ENCODE measurements at regions of chr2 and their contacts with region 1.

Region 1: DNA sequence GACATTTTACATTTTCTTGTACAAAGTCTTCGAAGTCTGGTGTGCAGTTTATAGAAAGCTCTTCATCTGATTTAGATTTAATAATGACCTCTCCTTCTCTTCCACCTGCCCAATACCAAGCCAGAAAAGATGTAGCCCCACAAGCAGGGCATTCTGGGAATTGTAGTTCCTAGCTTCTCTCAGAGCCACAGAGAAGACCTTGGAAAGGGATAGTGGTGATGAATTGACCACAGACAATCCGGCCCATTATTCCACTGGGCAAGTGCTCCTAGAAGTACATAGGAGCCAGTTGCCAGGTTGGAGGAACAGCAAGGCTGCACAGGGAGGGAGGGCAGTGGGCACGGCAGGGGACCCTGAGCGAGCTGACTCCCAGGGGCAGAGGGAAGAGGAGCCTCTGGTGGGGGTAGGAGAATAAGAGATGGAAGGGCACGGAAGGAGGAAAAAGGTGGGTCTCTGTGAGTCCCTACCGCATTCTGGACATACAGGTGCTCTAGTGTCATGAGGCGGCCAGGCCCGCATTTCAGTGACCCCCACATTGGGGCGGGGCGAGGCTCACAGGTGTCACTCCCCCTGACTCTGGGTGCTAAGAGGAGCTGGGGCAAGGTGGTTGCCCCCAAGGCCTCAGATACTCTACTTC is 152.5 kb upstream of the HAAO start:
- DNase-seq: no peak
- ATAC-seq: no peak
- H3K4me3 ChIP-seq: no peak overlapping the region
- H3K4me3 Mint-ChIP-seq: no peak overlapping the region
- H3K27ac ChIP-seq: no peak overlapping the region
- H3K27ac Mint-ChIP-seq: no peak overlapping the region
- H3K4me1 ChIP-seq: peaks cover 30 to 33% of the 10 kb centered on the region in 2 donors
- H3K4me1 Mint-ChIP-seq: peaks cover 33% of the 10 kb centered on the region
- H3K27me3 ChIP-seq: no peaks in the 10 kb centered on the region
- H3K27me3 Mint-ChIP-seq: no peaks in the 10 kb centered on the region
- CTCF ChIP-seq: no peak

Region 2: DNA sequence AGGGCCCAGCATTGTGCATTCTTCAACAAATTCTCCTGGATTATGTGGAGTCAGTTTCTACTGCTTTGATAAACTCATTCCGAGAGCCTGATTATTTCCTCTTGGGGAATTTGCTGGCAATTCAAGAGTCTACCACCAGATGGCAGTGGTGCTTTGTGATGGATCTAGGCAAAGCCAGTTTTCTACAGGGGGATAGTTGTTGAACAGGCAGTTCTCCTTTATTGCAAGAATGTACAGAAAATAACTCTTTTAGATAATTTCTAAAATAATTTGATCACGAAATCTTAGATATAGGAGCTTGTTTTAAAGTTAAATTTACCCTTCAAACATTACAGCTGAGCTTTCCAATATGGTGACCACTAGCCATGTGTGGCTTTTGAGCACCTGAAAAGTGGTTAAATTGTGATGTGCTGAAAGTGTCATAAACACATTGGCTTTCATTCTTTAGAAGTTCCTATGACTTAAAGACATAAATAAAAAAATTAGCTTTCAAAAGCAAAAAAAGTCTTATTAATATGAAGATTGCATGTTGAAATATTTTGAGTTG is 85.8 kb before region 1 on chr2:
- CTCF ChIA-PET with region 1: interaction called, 6 read pairs
- POLR2A ChIA-PET with region 1: no interaction called
- intact Hi-C with region 1: loop called (anchors 1 kb)
- DNase-seq: peak; percentile 72
- ATAC-seq: peak; percentile 53
- H3K4me3 ChIP-seq: no peak overlapping the region
- H3K4me3 Mint-ChIP-seq: no peak overlapping the region
- H3K27ac ChIP-seq: no peak overlapping the region
- H3K27ac Mint-ChIP-seq: no peak overlapping the region
- H3K4me1 ChIP-seq: no peaks in the 10 kb centered on the region
- H3K4me1 Mint-ChIP-seq: no peaks in the 10 kb centered on the region
- H3K27me3 ChIP-seq: no peaks in the 10 kb centered on the region
- H3K27me3 Mint-ChIP-seq: peaks cover 3% of the 10 kb centered on the region
- CTCF ChIP-seq: peak; percentile 92

Region 3: GRCh38 chr2:42974721-42975717 is 30.1 kb after region 1 on chr2:
- CTCF ChIA-PET with region 1: interaction called, 26 read pairs
- POLR2A ChIA-PET with region 1: no interaction called
- intact Hi-C with region 1: loop called (anchors 1 kb)
- DNase-seq: peak; percentile 69
- ATAC-seq: peak; percentile 78
- H3K4me3 ChIP-seq: no peak overlapping the region
- H3K4me3 Mint-ChIP-seq: peak overlapping the region; percentile 26
- H3K27ac ChIP-seq: no peak overlapping the region
- H3K27ac Mint-ChIP-seq: no peak overlapping the region
- H3K4me1 ChIP-seq: peaks cover 30 to 31% of the 10 kb centered on the region in 2 donors
- H3K4me1 Mint-ChIP-seq: peaks cover 35% of the 10 kb centered on the region
- H3K27me3 ChIP-seq: peaks cover 0 to 3% (median 0%) of the 10 kb centered on the region in 4 experiments
- H3K27me3 Mint-ChIP-seq: no peaks in the 10 kb centered on the region
- CTCF ChIP-seq: peak; percentile 75

Region 4: DNA sequence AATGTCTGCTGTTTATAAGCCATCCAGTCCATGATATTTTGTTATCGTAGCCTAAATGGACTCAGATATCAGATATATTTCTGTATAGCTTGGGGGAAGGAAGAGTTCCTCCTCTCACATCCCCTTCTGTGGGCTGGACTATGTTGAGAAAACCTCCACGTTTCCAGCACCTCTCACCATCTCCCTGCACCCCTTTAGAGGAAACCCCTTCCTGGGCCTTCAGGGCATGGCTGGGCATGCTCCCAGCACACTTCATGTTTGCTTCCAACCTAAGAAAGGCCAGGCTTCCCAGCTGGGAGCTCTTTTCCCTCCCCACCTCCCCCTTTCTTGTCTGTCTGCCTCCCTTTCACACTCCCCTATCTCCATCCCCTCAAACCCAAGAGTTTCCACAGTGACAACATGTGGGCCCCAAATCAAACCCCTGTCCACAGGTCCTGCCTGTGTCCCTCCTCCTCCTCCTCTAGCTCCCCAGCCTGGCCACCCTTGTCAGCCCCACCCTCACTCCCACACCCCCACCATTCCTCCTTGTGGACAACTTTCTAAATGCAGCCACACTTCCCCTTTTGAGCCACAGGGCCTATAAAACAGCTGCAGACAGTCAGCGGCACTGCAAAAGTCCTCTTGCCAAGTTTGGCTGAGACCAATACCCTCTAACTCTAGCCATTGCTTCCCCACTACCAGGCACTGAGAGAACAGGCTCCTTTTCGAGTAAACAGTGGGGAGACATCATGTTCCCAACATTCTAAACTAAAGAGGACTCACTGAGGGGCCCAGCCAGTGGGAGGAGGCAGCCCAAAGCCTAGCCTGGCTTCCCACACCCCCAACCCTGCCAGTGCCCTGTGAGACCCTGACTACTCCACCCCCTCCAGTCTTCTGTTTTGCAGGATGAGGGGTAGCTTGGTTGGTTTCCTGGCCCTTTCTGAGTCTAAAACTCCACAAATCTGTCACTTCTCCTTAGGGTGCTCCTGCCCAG is 161.0 kb after region 1 on chr2:
- CTCF ChIA-PET with region 1: interaction called, 3 read pairs
- POLR2A ChIA-PET with region 1: no interaction called
- intact Hi-C with region 1: loop called (anchors 2 kb)
- DNase-seq: peak; percentile 78
- ATAC-seq: peak; percentile 65
- H3K4me3 ChIP-seq: no peak overlapping the region
- H3K4me3 Mint-ChIP-seq: peak overlapping the region; percentile 78
- H3K27ac ChIP-seq: peak overlapping the region; percentile 80 to 88
- H3K27ac Mint-ChIP-seq: peak overlapping the region; percentile 96
- H3K4me1 ChIP-seq: peaks cover 58 to 74% of the 10 kb centered on the region in 2 donors
- H3K4me1 Mint-ChIP-seq: peaks cover 61% of the 10 kb centered on the region
- H3K27me3 ChIP-seq: no peaks in the 10 kb centered on the region
- H3K27me3 Mint-ChIP-seq: no peaks in the 10 kb centered on the region
- CTCF ChIP-seq: peak; percentile 61

Region 5: DNA sequence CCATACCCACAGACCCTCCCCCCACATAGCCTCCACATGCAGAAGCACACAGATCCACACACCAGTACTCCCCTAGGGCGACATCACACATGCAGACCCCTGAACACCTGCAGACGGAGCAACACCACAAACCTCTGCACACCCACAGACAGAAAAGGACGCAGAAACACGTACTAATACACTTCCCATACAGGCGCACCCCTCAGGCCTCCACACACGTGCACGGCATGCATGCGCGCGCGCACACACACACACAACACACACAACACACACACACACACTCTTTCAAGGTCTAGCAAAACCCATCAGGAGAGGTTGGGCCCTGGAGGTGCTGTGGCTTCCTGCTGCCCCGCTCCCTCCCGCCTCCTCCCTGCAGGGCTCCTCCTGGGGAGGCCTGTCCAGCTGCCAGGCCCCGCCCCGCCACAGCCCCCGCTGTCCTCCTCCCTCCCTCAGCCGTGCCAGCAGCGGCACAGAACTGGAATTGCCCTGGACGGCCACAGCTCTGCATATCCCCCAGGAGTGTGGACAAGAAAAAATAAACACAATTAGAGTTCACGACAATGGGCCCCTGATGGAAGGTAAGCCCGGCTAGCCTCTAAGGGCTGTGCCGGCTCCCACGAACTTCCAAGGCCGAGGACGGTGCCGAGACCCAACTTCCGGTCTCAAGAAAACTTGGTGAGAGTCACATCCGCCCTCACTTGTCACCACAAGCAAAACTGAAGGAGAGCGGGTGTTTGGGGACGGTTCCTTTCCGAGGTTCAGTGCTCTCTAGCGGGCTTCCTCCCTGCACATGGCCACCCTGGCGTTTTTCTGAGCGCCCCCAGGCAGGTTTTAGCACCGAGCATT is 274.7 kb after region 1 on chr2:
- CTCF ChIA-PET with region 1: interaction called, 16 read pairs
- POLR2A ChIA-PET with region 1: interaction called, 4 read pairs
- intact Hi-C with region 1: no loop called
- DNase-seq: peak; percentile 89
- ATAC-seq: peak; percentile 48
- H3K4me3 ChIP-seq: peak overlapping the region; percentile 9 to 92 (median 82)
- H3K4me3 Mint-ChIP-seq: peak overlapping the region; percentile 87
- H3K27ac ChIP-seq: peak overlapping the region; percentile 87 to 90
- H3K27ac Mint-ChIP-seq: peak overlapping the region; percentile 94
- H3K4me1 ChIP-seq: peaks cover 52 to 62% of the 10 kb centered on the region in 2 donors
- H3K4me1 Mint-ChIP-seq: peaks cover 59% of the 10 kb centered on the region
- H3K27me3 ChIP-seq: no peaks in the 10 kb centered on the region
- H3K27me3 Mint-ChIP-seq: no peaks in the 10 kb centered on the region
- CTCF ChIP-seq: no peak

Region 6: GRCh38 chr2:43537137-43537536 is 592.2 kb after region 1 on chr2:
- CTCF ChIA-PET with region 1: interaction called, 50 read pairs
- POLR2A ChIA-PET with region 1: no interaction called
- intact Hi-C with region 1: loop called (anchors 1 kb)
- DNase-seq: peak; percentile 75
- ATAC-seq: peak; percentile 70
- H3K4me3 ChIP-seq: peak overlapping the region in 1 of 5 experiments; percentile 21
- H3K4me3 Mint-ChIP-seq: peak overlapping the region; percentile 66
- H3K27ac ChIP-seq: peak overlapping the region; percentile 42 to 75
- H3K27ac Mint-ChIP-seq: peak overlapping the region; percentile 68
- H3K4me1 ChIP-seq: peaks cover 12 to 24% of the 10 kb centered on the region in 2 donors
- H3K4me1 Mint-ChIP-seq: peaks cover 26% of the 10 kb centered on the region
- H3K27me3 ChIP-seq: no peaks in the 10 kb centered on the region
- H3K27me3 Mint-ChIP-seq: no peaks in the 10 kb centered on the region
- CTCF ChIP-seq: no peak

Region 7: DNA sequence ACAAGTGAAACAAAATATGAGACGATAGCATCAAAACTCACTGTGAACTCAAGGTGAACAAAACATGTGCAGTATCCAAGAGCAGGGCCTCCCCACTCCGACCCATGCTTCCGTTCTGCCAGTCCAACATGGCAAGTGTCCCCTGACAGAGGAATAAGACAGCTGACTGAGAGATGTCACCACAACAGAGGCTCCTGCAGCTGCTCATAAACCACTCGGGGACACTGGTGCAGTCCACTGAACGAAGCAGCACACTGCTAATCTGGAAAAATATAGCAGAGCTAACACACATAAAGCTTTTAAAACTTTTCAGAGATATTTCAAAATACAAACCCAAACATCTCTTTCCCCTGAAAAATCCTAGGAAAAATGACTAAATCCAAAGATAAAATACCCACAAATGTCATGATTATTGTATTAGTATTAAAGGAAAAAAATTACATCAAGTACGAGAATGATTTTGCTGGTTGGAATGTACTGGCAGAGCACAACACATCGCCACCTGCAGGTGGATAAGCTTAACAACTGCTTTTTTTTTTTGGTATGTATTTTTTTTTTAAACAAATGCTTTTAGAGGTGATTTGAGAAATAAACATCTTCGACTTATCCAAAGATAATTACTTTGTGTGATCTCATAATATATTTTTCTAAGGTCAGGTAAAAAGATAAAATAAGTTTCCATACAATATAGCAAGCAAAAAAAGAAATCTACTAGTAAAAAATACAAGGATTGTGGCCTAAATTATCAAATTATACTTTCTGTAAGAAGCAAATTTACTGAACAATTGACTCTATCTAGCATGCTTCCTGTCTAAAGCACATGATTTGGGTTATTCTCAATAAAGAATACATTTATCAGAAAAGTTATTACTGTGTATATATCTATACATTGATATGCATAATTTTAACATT is 632.3 kb after region 1 on chr2:
- CTCF ChIA-PET with region 1: interaction called, 33 read pairs
- POLR2A ChIA-PET with region 1: no interaction called
- intact Hi-C with region 1: loop called (anchors 1 kb)
- DNase-seq: peak; percentile 60
- ATAC-seq: no peak
- H3K4me3 ChIP-seq: no peak overlapping the region
- H3K4me3 Mint-ChIP-seq: no peak overlapping the region
- H3K27ac ChIP-seq: no peak overlapping the region
- H3K27ac Mint-ChIP-seq: no peak overlapping the region
- H3K4me1 ChIP-seq: no peaks in the 10 kb centered on the region
- H3K4me1 Mint-ChIP-seq: no peaks in the 10 kb centered on the region
- H3K27me3 ChIP-seq: no peaks in the 10 kb centered on the region
- H3K27me3 Mint-ChIP-seq: no peaks in the 10 kb centered on the region
- CTCF ChIP-seq: peak; percentile 95